Activated B cell treated with CpG ODN at 0.5 μM for 24 hours (primary cell): ENCODE measurements at regions of chr2 and their contacts with region 1.

Region 1: DNA sequence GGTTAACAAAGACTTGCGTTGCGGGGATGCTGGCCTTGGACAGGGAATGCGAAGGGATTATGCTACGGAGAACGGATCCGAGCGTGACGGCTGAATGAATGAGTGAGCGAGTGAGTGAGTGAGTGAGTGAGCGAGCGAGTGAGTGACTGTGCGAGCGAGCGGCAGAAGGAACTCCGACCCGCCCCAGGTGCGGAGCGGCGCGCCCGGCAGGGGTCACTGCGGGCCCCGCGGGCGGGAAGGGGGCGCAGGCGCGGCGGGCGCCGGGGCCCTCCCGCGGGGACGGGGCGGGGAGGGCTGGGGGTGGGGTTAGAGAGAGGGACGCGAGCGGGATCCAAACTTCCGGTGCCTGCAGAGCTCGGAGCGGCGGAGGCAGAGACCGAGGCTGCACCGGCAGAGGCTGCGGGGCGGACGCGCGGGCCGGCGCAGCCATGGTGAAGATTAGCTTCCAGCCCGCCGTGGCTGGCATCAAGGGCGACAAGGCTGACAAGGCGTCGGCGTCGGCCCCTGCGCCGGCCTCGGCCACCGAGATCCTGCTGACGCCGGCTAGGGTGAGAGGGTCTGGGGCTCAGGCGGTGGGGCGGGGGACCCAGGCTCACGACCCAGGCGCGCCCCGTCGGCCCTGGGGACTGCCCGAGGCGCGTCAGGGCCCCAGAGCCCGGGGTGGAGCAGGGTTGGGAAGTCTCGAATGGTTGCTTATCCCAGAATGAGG is at the start of gene ITM2C:
- DNase-seq: peak; percentile 73
- ATAC-seq: peak; percentile 83
- H3K4me3 Mint-ChIP-seq: peak within 1 kb of the TSS; percentile 89
- H3K27ac Mint-ChIP-seq: peak within 1 kb of the TSS; percentile 70
- H3K4me1 Mint-ChIP-seq: peaks cover 57% of the 10 kb centered on the region
- H3K27me3 Mint-ChIP-seq: peaks cover 2% of the 10 kb centered on the region
- CTCF ChIP-seq: no peak
- total RNA-seq, gene ITM2C: 102 and 117 TPM in 2 replicates

Region 2: DNA sequence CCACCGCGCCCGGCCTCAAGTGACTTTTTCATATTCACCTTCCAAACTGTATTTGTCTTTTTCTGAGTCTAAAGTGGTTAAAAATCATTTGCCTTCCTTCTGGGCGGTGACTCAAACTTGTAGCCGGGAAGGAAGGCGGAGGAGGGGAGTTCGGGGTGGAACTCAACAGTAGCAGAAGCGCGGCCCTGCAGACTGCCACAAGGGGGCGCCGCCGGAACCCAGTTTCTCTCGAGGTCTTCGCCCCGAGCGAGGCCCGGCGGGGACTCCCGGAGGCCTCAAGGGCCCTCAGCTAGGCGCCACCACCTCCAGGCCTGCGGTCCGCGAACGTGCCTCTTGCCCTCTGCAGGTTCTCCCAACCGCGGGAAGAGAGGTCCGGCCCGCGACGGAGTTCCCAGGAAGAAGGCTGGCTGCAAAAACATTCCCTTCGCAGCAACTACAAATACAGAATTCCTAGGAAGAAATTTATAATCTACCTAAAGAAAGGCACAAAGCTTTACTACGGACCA is 16.8 kb before region 1 on chr2:
- CTCF ChIA-PET with region 1: interaction called, 5 read pairs
- POLR2A ChIA-PET with region 1: interaction called, 7 read pairs
- intact Hi-C with region 1: loop called (anchors 1 kb)
- DNase-seq: peak; percentile 84
- ATAC-seq: peak; percentile 97
- H3K4me3 Mint-ChIP-seq: peak overlapping the region; percentile 50
- H3K27ac Mint-ChIP-seq: no peak overlapping the region
- H3K4me1 Mint-ChIP-seq: peaks cover 8% of the 10 kb centered on the region
- H3K27me3 Mint-ChIP-seq: peaks cover 22% of the 10 kb centered on the region
- CTCF ChIP-seq: peak; percentile 24

Region 3: DNA sequence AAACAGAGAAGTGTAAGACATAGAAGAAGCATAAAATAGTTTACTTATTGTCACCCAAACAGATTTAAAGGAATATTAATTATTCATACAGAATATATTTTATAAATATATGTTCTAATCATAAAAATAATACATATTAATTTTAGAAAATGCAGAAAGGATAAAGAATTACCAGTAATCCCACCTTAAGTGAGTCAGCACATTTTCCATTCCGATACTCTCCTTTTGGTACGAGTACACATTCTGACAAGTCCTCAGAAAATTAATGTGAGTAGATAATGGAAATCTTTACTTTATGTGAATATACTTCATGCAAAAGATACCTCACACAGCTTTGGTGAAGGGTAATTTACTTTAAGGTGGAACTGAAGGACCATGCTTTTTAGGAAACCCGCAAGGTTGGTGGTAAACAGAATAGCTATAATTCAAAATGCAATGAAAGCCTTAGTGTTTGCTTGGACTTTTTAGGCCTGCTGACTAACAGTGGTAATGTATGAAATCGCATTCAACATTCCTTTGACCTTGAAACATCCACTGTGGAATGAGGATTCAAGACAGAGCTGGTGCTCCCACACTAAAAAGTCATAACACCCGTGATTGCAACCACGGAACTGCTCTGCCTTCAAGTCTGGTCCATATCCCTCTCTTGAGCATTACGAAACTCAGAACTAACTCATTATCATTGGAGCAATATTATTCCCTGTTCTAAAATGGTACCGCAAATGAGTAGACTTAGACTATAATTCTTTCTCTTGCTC is 288.2 kb after region 1 on chr2:
- CTCF ChIA-PET with region 1: no interaction called
- POLR2A ChIA-PET with region 1: no interaction called
- intact Hi-C with region 1: no loop called
- DNase-seq: no peak
- ATAC-seq: no peak
- H3K4me3 Mint-ChIP-seq: no peak overlapping the region
- H3K27ac Mint-ChIP-seq: no peak overlapping the region
- H3K4me1 Mint-ChIP-seq: peaks cover 2% of the 10 kb centered on the region
- H3K27me3 Mint-ChIP-seq: no peaks in the 10 kb centered on the region
- CTCF ChIP-seq: no peak